CD8-positive, alpha-beta T cell (primary cell): ENCODE measurements at regions of chr2 and their contacts with region 1.

Region 1: DNA sequence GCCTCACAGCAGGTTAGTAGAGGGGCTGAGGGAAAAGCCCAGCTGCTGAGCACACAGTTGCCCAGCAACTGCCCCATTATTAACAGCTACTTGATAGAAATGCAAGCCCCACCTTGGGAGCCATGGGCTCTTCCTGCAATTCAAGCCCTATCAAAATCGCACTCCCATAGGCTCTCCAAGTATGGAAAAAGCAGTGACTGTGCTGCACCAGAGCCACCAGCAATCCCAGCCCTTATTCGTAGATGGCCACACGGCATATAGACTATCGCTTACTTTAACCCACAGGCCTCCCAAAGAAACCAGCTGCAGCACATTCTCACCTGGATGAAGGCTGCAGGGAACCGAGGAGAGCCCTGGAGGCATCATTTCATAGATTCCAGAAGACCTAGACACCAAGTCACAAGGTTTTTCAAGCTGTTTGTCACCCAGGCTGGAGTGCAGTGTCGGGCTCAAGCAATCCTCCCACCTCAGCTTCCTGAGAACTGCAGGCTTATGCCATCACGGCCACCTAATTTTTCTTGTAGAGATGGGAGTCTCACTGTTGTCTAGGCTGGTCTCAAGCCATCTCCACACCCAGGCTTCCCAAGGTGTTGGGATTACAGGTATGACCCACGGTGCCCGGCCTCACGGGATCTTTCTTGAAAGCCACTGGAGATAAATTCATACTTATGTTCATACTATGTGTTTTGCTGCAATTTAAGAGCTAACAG is 11.3 kb downstream of the NCL start:
- DNase-seq: no peak
- ATAC-seq: no peak
- H3K4me3 ChIP-seq: no peak overlapping the region
- H3K4me3 Mint-ChIP-seq: no peak overlapping the region
- H3K27ac ChIP-seq: no peak overlapping the region
- H3K27ac Mint-ChIP-seq: peak overlapping the region; percentile 79
- H3K4me1 ChIP-seq: no peaks in the 10 kb centered on the region
- H3K4me1 Mint-ChIP-seq: peaks cover 17% of the 10 kb centered on the region
- H3K27me3 ChIP-seq: no peaks in the 10 kb centered on the region
- H3K27me3 Mint-ChIP-seq: no peaks in the 10 kb centered on the region
- CTCF ChIP-seq: no peak

Region 2: DNA sequence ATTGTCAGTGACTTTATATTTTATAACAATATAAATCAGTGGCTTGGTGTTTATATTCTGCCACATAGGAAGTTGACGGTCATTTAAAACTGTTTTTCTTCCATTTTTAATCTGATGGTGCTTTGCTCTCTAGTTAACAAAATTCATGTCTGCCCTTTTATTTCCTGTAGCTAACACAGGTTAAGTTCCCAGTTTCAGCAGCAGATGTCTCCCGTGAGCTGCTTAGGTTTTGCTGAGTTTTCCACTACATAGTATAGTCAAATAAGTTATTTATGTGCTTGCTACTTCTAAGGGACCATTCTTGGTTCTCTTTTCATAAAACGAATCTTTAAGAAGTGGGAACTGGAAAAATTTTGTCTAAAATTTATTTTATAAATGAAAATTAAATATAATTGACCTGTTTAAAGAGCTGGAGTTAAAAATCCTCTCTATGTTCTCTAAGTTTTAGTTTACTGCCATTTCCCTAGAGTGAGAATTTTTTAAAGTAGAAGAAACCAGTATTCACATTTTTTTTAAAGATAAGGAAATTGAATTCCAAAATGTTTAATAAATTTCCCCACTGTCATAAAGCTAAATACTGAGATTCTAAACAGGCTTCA is 348.7 kb before region 1 on chr2:
- CTCF ChIA-PET with region 1: interaction called, 47 read pairs
- POLR2A ChIA-PET with region 1: interaction called, 7 read pairs
- intact Hi-C with region 1: loop called (anchors 1 kb)
- DNase-seq: peak; percentile 10 to 67 (median 51)
- ATAC-seq: peak; percentile 92
- H3K4me3 ChIP-seq: no peak overlapping the region
- H3K4me3 Mint-ChIP-seq: no peak overlapping the region
- H3K27ac ChIP-seq: no peak overlapping the region
- H3K27ac Mint-ChIP-seq: no peak overlapping the region
- H3K4me1 ChIP-seq: no peaks in the 10 kb centered on the region
- H3K4me1 Mint-ChIP-seq: no peaks in the 10 kb centered on the region
- H3K27me3 ChIP-seq: no peaks in the 10 kb centered on the region
- H3K27me3 Mint-ChIP-seq: no peaks in the 10 kb centered on the region
- CTCF ChIP-seq: peak; percentile 73

Region 3: DNA sequence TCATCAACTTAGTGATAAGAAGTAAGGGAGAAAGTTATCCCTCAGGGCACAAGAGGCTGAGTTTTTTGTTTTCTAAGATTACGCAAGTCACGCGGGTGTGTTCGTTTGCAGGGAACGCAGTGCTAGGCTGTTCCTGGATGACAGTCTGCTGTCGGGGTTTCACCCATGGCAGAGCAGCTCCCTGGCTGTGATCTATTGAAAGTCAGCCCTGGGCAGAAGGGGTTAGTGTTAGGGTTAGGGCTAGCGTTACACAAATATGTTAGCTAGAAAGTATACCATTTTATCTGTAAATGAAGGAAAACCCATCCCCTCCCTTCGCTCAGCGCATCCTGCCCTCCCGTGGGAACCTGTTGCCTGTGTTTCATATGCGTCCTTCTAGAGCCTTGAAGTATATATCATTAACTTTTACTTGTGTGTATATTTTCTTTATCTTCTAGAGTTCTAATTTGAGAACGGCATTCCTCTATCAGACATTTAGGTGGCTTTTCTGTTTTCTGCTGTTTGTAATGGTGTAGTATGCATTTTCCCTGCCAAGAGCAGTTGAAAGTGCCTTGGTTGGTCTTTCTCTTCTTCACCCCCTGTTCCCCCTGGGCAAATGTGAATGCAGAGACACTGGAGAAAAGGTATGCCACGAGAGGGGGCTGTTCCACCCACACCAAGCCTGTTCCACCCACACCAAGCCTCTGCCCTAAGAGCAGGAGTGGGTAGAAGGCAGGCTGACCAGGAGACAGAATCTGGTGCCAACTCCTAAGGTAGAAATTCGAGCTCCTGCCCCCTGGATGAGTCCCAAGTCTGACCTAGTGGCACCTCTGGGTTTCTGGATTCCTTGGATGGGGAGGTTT is 207.5 kb before region 1 on chr2:
- CTCF ChIA-PET with region 1: interaction called, 3 read pairs
- POLR2A ChIA-PET with region 1: no interaction called
- intact Hi-C with region 1: loop called in 1 of 2 experiments (anchors 5 kb)
- DNase-seq: peak in 2 of 9 experiments; percentile 30 to 39
- ATAC-seq: no peak
- H3K4me3 ChIP-seq: no peak overlapping the region
- H3K4me3 Mint-ChIP-seq: no peak overlapping the region
- H3K27ac ChIP-seq: no peak overlapping the region
- H3K27ac Mint-ChIP-seq: no peak overlapping the region
- H3K4me1 ChIP-seq: no peaks in the 10 kb centered on the region
- H3K4me1 Mint-ChIP-seq: no peaks in the 10 kb centered on the region
- H3K27me3 ChIP-seq: no peaks in the 10 kb centered on the region
- H3K27me3 Mint-ChIP-seq: no peaks in the 10 kb centered on the region
- CTCF ChIP-seq: no peak

Region 4: GRCh38 chr2:231399853-231400680 is 52.9 kb before region 1 on chr2:
- CTCF ChIA-PET with region 1: interaction called, 11 read pairs
- POLR2A ChIA-PET with region 1: no interaction called
- intact Hi-C with region 1: loop called in 1 of 2 experiments (anchors 1 kb)
- DNase-seq: no peak
- ATAC-seq: no peak
- H3K4me3 ChIP-seq: no peak overlapping the region
- H3K4me3 Mint-ChIP-seq: no peak overlapping the region
- H3K27ac ChIP-seq: no peak overlapping the region
- H3K27ac Mint-ChIP-seq: no peak overlapping the region
- H3K4me1 ChIP-seq: no peaks in the 10 kb centered on the region
- H3K4me1 Mint-ChIP-seq: peaks cover 8% of the 10 kb centered on the region
- H3K27me3 ChIP-seq: peaks cover 0 to 2% of the 10 kb centered on the region in 2 experiments
- H3K27me3 Mint-ChIP-seq: peaks cover 15% of the 10 kb centered on the region
- CTCF ChIP-seq: no peak

Region 5: GRCh38 chr2:231463698-231464575 is 11.0 kb after region 1 on chr2 and contains the start of gene NCL:
- CTCF ChIA-PET with region 1: interaction called, 17 read pairs
- POLR2A ChIA-PET with region 1: interaction called, 60 read pairs
- intact Hi-C with region 1: loop called in 1 of 2 experiments (anchors 1 kb)
- DNase-seq: peak; percentile 71 to 94 (median 82)
- ATAC-seq: peak; percentile 62
- H3K4me3 ChIP-seq: peak within 1 kb of the TSS; percentile 97
- H3K4me3 Mint-ChIP-seq: peak within 1 kb of the TSS; percentile 96
- H3K27ac ChIP-seq: peak within 1 kb of the TSS; percentile 97 to 98
- H3K27ac Mint-ChIP-seq: peak within 1 kb of the TSS; percentile 100
- H3K4me1 ChIP-seq: peaks cover 36% of the 10 kb centered on the region
- H3K4me1 Mint-ChIP-seq: peaks cover 52% of the 10 kb centered on the region
- H3K27me3 ChIP-seq: no peaks in the 10 kb centered on the region
- H3K27me3 Mint-ChIP-seq: no peaks in the 10 kb centered on the region
- CTCF ChIP-seq: no peak
- total RNA-seq, gene NCL: 390 to 394 TPM

Region 6: GRCh38 chr2:231530091-231531011 is 77.4 kb after region 1 on chr2 and contains the start of gene NMUR1:
- CTCF ChIA-PET with region 1: no interaction called
- POLR2A ChIA-PET with region 1: no interaction called
- intact Hi-C with region 1: no loop called
- DNase-seq: peak; percentile 48 to 89 (median 69)
- ATAC-seq: peak; percentile 92
- H3K4me3 ChIP-seq: peak within 1 kb of the TSS; percentile 33 to 50
- H3K4me3 Mint-ChIP-seq: peak within 1 kb of the TSS; percentile 58
- H3K27ac ChIP-seq: peak within 1 kb of the TSS in 1 of 2 experiments; percentile 67
- H3K27ac Mint-ChIP-seq: peak within 1 kb of the TSS; percentile 32
- H3K4me1 ChIP-seq: peaks cover 33% of the 10 kb centered on the region
- H3K4me1 Mint-ChIP-seq: peaks cover 30% of the 10 kb centered on the region
- H3K27me3 ChIP-seq: peaks cover 0 to 7% of the 10 kb centered on the region in 2 experiments
- H3K27me3 Mint-ChIP-seq: peaks cover 8% of the 10 kb centered on the region
- CTCF ChIP-seq: peak; percentile 89
- total RNA-seq, gene NMUR1: 0.27 to 0.50 TPM

Region 7: DNA sequence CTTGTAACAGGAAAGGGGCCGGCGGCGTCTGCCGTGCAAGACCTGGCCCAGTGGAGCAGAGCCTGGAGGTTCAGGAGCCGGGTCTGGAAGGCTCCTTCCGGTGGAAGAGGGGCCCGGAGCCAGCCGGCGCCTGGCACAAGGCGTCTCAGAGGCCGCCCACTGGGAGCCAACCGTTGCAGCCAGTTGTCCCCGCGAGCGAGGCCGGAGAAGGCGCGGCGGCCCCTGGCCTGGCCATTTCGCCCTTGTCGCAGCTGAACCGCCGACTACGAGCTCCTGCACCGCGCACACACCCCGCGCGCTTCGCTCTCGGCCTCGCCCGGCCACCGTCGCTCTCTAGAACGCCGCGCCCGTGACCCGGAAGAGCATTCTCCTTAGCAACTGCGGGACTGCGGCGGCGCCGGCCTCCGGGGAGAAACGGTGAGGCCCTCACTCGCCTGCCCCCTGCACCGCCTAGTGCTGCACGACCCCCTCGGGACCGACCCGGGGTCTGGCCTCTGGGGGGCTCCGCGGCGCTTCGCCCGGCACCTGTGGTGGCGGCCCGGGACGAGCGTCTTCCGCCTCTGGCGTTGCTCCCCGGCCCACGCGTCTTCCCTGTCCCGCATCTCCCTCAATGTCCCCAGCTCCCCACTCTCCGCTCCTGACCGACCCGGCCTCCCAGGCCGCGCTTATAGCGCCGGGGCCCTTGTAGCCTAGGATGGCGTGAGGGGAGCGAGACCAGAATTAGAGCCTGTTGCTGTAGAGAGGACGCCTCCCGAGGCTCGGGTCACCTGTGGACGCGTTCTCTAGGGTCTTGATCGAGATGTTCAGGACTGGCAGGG is 508.6 kb after region 1 on chr2 and contains the start of gene DIS3L2:
- CTCF ChIA-PET with region 1: no interaction called
- POLR2A ChIA-PET with region 1: no interaction called
- intact Hi-C with region 1: no loop called
- DNase-seq: peak; percentile 60 to 89 (median 78)
- ATAC-seq: peak; percentile 94
- H3K4me3 ChIP-seq: peak within 1 kb of the TSS; percentile 78 to 80
- H3K4me3 Mint-ChIP-seq: peak within 1 kb of the TSS; percentile 95
- H3K27ac ChIP-seq: peak within 1 kb of the TSS; percentile 57 to 68
- H3K27ac Mint-ChIP-seq: peak within 1 kb of the TSS; percentile 92
- H3K4me1 ChIP-seq: peaks cover 20% of the 10 kb centered on the region
- H3K4me1 Mint-ChIP-seq: peaks cover 43% of the 10 kb centered on the region
- H3K27me3 ChIP-seq: no peaks in the 10 kb centered on the region
- H3K27me3 Mint-ChIP-seq: no peaks in the 10 kb centered on the region
- CTCF ChIP-seq: no peak
- total RNA-seq, gene DIS3L2: 46.9 to 56.5 TPM